PC-9 (cell line): ENCODE measurements at regions of chr12 and their contacts with region 1.

Region 1: DNA sequence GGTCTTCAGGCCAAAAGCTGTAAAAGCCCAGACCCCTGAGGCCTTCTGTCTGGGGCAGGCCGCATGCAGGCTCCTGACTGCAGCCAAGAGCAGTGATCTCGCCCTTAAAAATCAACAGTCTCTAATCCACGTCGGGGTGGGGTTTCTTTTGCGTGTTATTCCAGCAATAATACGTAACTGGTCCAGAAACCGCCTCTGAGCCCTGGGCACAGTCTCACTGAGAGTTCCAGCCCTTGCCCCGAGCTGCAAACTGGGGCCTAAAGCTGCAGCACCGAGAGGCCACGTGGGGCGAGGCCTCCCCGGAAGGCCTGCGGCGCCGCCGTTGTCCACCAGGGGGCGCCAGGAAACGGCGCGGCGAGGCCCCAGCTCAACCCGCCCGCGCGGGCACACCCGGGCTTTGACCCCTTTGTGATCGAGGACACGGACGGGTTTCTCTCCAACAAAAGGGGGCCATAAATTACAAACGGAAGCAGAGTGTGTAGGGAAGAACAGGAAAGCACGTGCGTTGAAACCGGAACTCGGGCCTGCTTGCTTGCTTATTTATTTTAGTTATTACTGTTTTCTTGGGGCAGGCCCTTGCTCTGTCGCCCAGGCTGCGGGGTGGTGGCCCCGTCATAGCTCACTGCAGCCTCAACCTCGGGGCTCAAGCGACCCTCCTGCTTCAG is 87.2 kb downstream of the NINJ2 start:
- DNase-seq: peak; percentile 48 to 84
- H3K4me3 ChIP-seq: peak overlapping the region; percentile 33; the same call in 1 of the 2 replicates
- H3K27ac ChIP-seq: no peak overlapping the region
- H3K4me1 ChIP-seq: peaks cover 22% of the 10 kb centered on the region
- H3K27me3 ChIP-seq: no peaks in the 10 kb centered on the region
- CTCF ChIP-seq: peak; percentile 99

Region 2: GRCh38 chr12:503111-503761 is 72.8 kb before region 1 on chr12:
- CTCF ChIA-PET with region 1: no interaction called
- POLR2A ChIA-PET with region 1: no interaction called
- intact Hi-C with region 1: no loop called
- DNase-seq: peak; percentile 93 to 100
- H3K4me3 ChIP-seq: no peak overlapping the region
- H3K27ac ChIP-seq: peak overlapping the region; percentile 75
- H3K4me1 ChIP-seq: peaks cover 30% of the 10 kb centered on the region
- H3K27me3 ChIP-seq: 0 out of 2 replicates have a peak, but pooled peaks cover 3% of the 10 kb centered on the region
- CTCF ChIP-seq: no peak

Region 3: DNA sequence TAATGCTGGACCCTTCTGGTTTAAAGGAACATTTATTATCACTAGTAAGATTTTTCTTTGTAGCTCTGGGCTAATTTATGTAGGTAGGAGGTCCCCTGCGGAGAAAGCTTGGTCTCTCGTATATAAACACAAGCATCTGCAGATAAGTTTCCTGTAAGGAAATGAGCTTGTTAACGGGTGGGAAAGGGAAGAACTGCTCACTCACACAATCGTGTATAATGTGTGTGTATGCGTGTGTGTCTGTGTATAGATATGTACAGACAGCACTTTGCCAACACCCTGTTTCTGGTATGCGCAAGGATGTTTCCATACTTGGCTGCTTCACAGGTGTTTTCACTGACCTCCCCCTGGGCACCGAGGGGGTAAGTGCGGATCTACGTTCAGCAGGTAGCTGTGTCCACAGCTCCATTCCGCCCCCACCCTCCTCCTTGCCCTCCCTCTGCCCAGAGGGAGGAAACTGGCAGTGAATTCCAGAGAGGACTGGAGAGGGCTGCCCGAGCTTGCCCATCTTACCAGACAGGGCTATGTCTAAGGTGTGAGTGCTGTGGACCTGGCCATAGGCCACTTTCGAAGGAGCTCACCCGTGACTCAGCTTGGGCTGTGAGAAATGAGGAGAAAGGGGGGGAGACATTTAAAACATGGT is 22.0 kb after region 1 on chr12:
- CTCF ChIA-PET with region 1: no interaction called
- POLR2A ChIA-PET with region 1: no interaction called
- intact Hi-C with region 1: no loop called
- DNase-seq: no peak
- H3K4me3 ChIP-seq: no peak overlapping the region
- H3K27ac ChIP-seq: no peak overlapping the region
- H3K4me1 ChIP-seq: no peaks in the 10 kb centered on the region
- H3K27me3 ChIP-seq: no peaks in the 10 kb centered on the region
- CTCF ChIP-seq: no peak

Region 4: GRCh38 chr12:1583421-1584078 is 1007.5 kb after region 1 on chr12:
- CTCF ChIA-PET with region 1: no interaction called
- POLR2A ChIA-PET with region 1: no interaction called
- intact Hi-C with region 1: loop called (anchors 1 kb)
- DNase-seq: peak; percentile 73 to 77
- H3K4me3 ChIP-seq: peak overlapping the region; percentile 32; the same call in 1 of the 2 replicates
- H3K27ac ChIP-seq: no peak overlapping the region
- H3K4me1 ChIP-seq: peaks cover 6% of the 10 kb centered on the region
- H3K27me3 ChIP-seq: no peaks in the 10 kb centered on the region
- CTCF ChIP-seq: peak; percentile 98